Activated B cell treated with CpG ODN at 0.5 μM for 24 hours (primary cell): ENCODE measurements at regions of chr11 and their contacts with region 1.

Region 1: GRCh38 chr11:61161190-61162091 is at the start of gene VPS37C:
- DNase-seq: peak; percentile 98
- ATAC-seq: peak; percentile 77
- H3K4me3 Mint-ChIP-seq: peak within 1 kb of the TSS; percentile 93
- H3K27ac Mint-ChIP-seq: peak within 1 kb of the TSS; percentile 97
- H3K4me1 Mint-ChIP-seq: peaks cover 65% of the 10 kb centered on the region
- H3K27me3 Mint-ChIP-seq: no peaks in the 10 kb centered on the region
- CTCF ChIP-seq: no peak
- total RNA-seq, gene VPS37C: 14.4 and 18.1 TPM in 2 replicates

Region 2: GRCh38 chr11:60841797-60842667 is 319.4 kb before region 1 on chr11 and contains the start of gene CCDC86:
- CTCF ChIA-PET with region 1: no interaction called
- POLR2A ChIA-PET with region 1: no interaction called
- intact Hi-C with region 1: loop called (anchors 1 kb)
- DNase-seq: peak; percentile 100
- ATAC-seq: peak; percentile 96
- H3K4me3 Mint-ChIP-seq: peak within 1 kb of the TSS; percentile 83
- H3K27ac Mint-ChIP-seq: peak within 1 kb of the TSS; percentile 85
- H3K4me1 Mint-ChIP-seq: peaks cover 41% of the 10 kb centered on the region
- H3K27me3 Mint-ChIP-seq: no peaks in the 10 kb centered on the region
- CTCF ChIP-seq: no peak
- total RNA-seq, gene CCDC86: 30.3 and 30.6 TPM in 2 replicates

Region 3: DNA sequence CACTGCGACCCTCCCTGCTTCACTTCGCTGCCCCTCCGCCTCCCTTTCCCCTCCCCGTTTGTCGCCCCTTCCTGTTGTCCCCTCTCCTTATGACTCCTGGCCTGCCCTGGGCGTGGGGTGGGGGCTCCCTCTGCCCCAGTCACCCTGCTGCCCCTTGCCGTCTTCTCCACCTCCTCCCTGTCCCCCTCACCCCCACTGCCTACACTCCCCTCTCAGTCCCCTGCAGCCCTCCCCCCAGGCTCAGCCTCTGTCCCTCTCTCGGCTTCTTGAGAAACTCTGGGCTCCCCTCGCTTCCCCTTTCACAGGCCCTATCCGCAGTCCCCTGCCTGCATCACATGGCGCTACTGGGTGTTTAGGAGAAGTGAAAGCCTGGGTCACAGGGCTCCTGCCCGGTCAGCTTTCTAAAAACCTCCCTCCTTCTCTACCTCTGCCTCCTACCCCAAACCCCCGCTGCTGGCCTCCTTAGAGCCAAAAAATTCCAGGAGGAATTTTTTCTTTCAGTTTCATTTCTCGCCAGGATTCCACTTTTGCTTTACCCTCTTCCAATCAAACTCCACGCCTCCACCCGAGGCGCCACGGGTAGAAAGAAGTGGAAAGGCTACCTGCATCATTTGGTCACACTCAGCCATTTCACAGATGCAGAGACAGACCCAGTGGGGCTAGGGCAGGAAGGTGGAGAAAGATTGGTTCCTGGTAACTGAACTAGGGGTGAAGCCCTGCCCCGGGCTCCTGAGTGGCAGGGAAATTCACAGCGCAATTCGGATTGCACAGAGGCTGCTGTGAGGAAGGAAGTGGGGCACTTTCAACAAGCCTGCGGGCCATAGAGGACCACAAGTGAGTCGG is 209.3 kb before region 1 on chr11 and contains the start of gene SLC15A3:
- CTCF ChIA-PET with region 1: no interaction called
- POLR2A ChIA-PET with region 1: interaction called, 3 read pairs
- intact Hi-C with region 1: loop called (anchors 1 kb)
- DNase-seq: peak; percentile 62
- ATAC-seq: peak; percentile 88
- H3K4me3 Mint-ChIP-seq: peak within 1 kb of the TSS; percentile 91
- H3K27ac Mint-ChIP-seq: peak within 1 kb of the TSS; percentile 91
- H3K4me1 Mint-ChIP-seq: peaks cover 57% of the 10 kb centered on the region
- H3K27me3 Mint-ChIP-seq: no peaks in the 10 kb centered on the region
- CTCF ChIP-seq: no peak
- total RNA-seq, gene SLC15A3: 76.4 and 77.8 TPM in 2 replicates

Region 4: GRCh38 chr11:61028272-61028761 is 133.1 kb before region 1 on chr11:
- CTCF ChIA-PET with region 1: no interaction called
- POLR2A ChIA-PET with region 1: no interaction called
- intact Hi-C with region 1: no loop called
- DNase-seq: no peak
- ATAC-seq: peak; percentile 91
- H3K4me3 Mint-ChIP-seq: peak overlapping the region; percentile 54
- H3K27ac Mint-ChIP-seq: peak overlapping the region; percentile 86
- H3K4me1 Mint-ChIP-seq: peaks cover 49% of the 10 kb centered on the region
- H3K27me3 Mint-ChIP-seq: no peaks in the 10 kb centered on the region
- CTCF ChIP-seq: no peak

Region 5: DNA sequence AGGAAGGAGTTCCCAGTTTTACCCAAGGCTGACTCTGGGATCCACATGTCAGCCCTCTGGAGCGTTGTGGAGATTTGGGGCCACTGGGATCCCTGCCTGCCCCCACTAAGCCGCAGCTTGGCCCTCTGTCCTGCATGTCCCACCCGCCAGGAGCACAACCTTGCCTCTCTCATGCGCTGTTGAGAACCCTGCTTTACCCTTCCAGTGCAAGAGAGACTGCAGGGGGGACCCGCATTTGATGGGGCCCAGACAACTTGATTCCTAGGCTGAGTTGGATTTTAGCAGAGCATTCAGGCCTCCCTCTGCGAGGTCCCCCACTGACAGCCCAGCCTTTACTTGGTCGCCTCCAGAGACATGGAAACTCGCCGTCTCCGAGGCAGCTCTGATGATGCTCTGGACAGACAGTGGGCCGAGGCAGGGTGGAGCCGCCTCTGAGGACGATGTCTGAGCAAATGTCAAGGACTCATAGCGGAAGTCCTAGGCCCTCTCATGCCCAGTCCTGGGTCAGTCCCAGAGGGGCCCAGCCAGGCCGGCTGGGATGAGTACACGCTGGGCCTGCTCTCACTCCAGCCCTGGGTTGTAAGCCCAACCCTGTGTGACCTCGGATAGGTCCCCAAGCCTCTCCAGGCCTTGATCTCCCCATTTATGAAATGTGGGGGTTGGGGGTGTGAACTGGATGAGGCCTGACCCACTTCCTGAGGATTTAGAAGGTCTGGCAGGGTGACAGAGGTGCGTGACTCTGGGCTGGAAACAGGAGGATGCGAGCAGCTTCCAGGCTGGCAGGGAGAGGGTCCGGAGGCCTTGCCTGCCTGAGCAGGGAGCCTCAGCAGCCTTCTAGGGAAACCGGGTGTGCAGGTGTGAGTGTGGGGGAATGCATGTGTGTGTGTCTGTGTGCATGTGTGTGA is 58.5 kb before region 1 on chr11:
- CTCF ChIA-PET with region 1: no interaction called
- POLR2A ChIA-PET with region 1: no interaction called
- intact Hi-C with region 1: no loop called
- DNase-seq: no peak
- ATAC-seq: no peak
- H3K4me3 Mint-ChIP-seq: peak overlapping the region; percentile 42
- H3K27ac Mint-ChIP-seq: peak overlapping the region; percentile 0
- H3K4me1 Mint-ChIP-seq: peaks cover 10% of the 10 kb centered on the region
- H3K27me3 Mint-ChIP-seq: no peaks in the 10 kb centered on the region
- CTCF ChIP-seq: no peak

Region 6: DNA sequence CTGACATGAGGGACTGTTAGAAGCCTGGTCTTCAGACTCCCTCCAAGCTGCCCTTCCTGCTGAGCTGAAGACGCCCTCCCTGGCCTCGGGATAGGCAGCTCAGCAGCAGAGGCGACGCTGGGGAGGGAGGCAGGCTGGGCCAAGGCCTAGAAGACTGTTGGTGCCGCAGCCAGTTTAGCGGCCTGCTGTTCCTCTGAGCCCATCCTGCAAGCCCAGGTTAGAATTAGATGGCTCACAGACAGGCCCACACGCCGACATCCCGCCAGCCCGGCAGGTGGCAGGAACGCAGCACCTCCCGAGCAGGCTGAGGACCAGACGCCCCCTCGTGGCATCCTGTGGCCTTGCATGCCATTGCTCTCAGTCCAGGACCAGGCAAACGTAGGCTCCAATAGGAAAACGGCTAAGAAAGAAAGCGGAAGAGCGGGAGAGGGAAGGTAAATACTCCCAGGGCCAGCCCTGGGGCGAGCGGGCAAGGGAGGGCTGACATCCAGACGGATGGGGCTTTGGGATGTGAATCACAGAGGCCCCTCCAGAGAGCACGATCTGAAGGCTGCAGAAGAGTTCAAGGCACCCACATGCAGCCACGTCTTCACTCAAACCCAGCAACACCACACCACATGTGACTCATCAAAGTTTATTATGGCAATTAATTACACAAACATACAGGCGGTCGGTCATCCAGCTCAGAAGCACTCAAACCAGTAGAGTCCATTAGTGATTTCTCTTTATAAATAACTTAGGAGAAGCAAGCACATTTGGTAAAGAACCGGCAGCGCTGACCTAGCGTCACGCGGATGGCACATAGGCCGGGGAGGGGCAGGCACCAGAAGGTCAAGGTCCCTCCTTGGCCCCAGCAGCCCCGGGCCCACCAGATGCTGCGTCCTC is 31.6 kb before region 1 on chr11:
- CTCF ChIA-PET with region 1: interaction called, 4 read pairs
- POLR2A ChIA-PET with region 1: interaction called, 6 read pairs
- intact Hi-C with region 1: loop called (anchors 2 kb)
- DNase-seq: peak; percentile 82
- ATAC-seq: peak; percentile 100
- H3K4me3 Mint-ChIP-seq: no peak overlapping the region
- H3K27ac Mint-ChIP-seq: peak overlapping the region; percentile 6
- H3K4me1 Mint-ChIP-seq: peaks cover 8% of the 10 kb centered on the region
- H3K27me3 Mint-ChIP-seq: no peaks in the 10 kb centered on the region
- CTCF ChIP-seq: peak; percentile 96

Region 7: DNA sequence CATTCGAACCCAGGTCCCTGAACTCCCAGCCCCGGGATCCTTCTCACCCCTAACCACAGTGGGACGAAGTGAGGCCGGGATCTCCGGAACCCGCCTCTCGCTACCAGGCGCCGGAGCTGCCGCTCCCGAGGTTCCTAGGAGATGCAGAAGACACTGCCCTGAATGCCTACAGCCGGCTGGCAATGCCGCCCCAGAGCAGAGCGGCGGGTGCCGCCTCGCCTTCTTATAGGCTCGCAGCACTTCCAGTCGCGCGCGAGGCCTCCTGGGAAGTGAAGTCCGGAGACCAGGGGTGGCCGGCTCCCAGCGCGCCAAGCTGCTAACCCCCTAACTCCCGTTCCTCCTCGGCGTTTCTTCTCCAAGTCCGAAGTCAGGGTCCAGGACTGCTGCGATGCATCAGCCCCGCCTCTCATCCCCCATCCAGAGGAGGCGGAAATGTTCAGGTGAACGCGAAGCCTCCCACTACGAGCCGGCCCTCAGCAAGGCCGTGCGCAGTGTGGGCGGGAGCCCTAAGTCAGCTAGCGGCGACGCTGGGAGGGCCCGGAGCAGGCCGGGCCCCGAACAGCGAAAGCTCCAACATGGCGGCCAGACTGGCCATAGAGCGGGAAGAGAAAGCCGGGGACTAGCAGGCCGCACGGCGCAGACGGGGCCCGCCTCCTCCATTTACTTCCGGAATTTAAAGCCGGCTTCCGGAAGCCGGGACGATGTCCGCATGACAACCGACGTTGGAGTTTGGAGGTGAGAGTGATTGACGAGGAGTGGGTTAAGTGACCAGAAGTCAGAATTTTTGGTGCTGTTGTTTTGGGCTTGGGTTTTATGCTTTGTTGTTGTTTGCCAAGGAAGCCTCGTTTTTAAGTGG is 200.5 kb after region 1 on chr11 and contains the starts of genes CYB561A3 and TMEM138:
- CTCF ChIA-PET with region 1: no interaction called
- POLR2A ChIA-PET with region 1: interaction called, 3 read pairs
- intact Hi-C with region 1: loop called (anchors 2 kb)
- DNase-seq: peak; percentile 84
- ATAC-seq: peak; percentile 76
- H3K4me3 Mint-ChIP-seq: peak within 1 kb of the TSS; percentile 100
- H3K27ac Mint-ChIP-seq: peak within 1 kb of the TSS; percentile 98
- H3K4me1 Mint-ChIP-seq: peaks cover 59% of the 10 kb centered on the region
- H3K27me3 Mint-ChIP-seq: no peaks in the 10 kb centered on the region
- CTCF ChIP-seq: no peak
- total RNA-seq, gene CYB561A3: 397 and 433 TPM in 2 replicates
- total RNA-seq, gene TMEM138: 69.7 and 81.2 TPM in 2 replicates